ENCODE measurements at regions of chr9 and their contacts with region 1.

Region 1: DNA sequence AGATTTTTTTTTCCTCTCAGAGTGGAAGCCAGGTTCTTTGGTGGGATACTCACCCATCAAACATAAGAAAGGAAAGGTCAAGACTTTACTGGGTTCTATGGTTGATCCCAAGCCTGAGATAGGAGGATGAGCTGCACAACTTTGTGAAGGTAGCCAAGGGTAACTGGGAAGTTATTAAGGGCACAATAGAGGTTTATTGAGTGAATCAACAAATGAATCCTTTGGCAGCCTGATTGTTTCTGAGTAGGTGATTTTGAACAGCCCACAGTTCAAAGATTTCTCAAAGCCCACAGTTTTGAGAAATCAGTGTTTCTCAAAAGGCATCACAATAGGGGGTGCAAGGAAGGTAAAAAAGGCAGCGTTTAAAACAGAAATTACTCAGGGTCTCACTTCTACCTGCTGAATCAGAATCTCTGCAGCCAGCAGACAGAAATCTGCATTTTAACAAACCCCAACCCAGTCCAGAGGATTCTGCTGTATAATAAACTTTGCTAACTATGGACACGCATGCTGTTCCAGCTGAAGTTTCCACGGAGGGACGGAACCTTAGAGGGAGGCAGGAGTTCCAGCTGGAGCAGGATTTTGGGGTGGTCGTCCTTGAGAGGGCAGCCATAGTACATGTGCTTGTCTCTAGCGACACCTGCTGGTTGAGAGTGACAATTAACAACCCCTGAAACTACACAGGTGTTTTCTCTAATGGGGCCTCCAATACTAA is 32.7 kb upstream of the FSD1L start:
- DNase-seq: peak; percentile 68 to 84
- H3K4me3 ChIP-seq: no peak overlapping the region
- H3K4me1 ChIP-seq: 0 out of 2 replicates have a peak, but pooled peaks cover 3% of the 10 kb centered on the region
- H3K27me3 ChIP-seq: no peaks in the 10 kb centered on the region

Region 2: GRCh38 chr9:104774831-104775573 is 640.1 kb before region 1 on chr9:
- in situ Hi-C with region 1: loop called (anchors 10 kb)
- DNase-seq: no peak
- H3K4me3 ChIP-seq: no peak overlapping the region
- H3K4me1 ChIP-seq: no peaks in the 10 kb centered on the region
- H3K27me3 ChIP-seq: no peaks in the 10 kb centered on the region

Region 3: DNA sequence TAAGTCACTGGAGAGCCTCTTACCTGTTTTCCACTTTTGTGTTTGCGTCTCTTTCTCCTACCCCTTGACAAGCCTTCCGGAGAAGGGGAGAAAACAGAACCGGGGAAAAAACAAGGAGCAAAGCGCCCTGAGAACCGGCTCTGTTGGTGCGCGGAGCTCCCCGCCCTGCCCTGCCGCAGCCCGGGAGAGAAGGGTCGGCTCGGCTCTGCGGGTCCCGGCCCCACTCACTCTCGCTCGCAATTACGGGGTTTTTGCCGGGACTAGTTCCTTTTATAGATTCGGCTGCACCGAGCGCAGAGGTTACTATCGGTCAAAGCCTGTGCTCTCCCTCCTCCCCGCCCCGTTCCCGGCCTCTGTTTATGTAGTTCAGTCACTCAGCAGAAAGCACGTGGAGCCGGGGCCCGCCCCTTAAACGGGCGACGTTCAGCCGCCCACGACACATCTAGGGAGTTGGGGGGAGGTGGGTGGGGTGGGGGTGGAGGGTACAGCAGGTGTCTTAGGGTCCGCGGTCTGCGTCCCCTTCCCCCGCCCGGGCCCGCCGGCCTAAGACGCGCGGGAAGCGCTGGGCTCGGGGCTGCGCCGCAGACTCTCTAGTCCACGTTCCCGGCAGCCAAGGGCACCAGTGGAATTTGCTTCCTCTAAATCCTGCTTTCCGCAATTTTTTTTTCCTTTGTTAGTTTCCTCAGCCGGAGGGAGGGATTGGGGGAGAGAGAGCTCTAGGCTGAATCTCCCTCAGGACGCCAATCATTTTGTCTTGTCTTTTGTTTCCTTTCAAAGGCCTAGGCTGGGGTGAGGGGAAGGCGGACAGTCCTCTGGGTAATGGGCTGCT is 487.0 kb before region 1 on chr9 and contains the start of gene ABCA1:
- in situ Hi-C with region 1: loop called (anchors 10 kb)
- DNase-seq: peak; percentile 83 to 95
- H3K4me3 ChIP-seq: peak within 1 kb of the TSS; percentile 42
- H3K4me1 ChIP-seq: peaks cover 15% of the 10 kb centered on the region
- H3K27me3 ChIP-seq: no peaks in the 10 kb centered on the region

Region 4: GRCh38 chr9:105053209-105053652 is 361.9 kb before region 1 on chr9:
- in situ Hi-C with region 1: no loop called
- DNase-seq: no peak
- H3K4me3 ChIP-seq: no peak overlapping the region
- H3K4me1 ChIP-seq: no peaks in the 10 kb centered on the region
- H3K27me3 ChIP-seq: no peaks in the 10 kb centered on the region

Region 5: DNA sequence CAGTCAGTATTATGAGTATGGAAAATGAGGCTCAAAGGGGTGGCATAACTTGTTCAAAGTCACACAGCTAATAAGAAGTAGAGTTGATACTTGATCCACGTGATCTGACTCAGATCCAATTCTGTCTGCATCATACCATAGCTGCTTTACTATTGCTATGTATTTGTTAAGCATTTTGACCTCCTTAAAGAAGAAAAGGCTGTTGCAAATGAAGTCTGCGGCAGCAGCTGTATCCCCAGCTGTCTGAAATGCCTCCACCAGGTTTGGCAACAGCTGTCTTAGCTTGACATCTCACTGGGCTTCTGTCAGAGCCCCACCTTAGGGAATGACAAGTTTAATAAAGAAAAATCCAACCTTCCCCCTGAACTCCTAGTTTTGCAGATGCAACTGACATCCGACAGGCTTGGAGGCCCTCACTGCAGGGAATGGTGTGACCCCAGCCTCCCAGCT is 246.2 kb before region 1 on chr9:
- in situ Hi-C with region 1: loop called (anchors 5 kb)
- DNase-seq: no peak
- H3K4me3 ChIP-seq: no peak overlapping the region
- H3K4me1 ChIP-seq: no peaks in the 10 kb centered on the region
- H3K27me3 ChIP-seq: no peaks in the 10 kb centered on the region

Region 6: GRCh38 chr9:105751761-105752160 is 336.7 kb after region 1 on chr9:
- in situ Hi-C with region 1: no loop called
- DNase-seq: no peak
- H3K4me3 ChIP-seq: no peak overlapping the region
- H3K4me1 ChIP-seq: no peaks in the 10 kb centered on the region
- H3K27me3 ChIP-seq: no peaks in the 10 kb centered on the region

Measured in HAP-1 (cell line).